CD4-positive, alpha-beta memory T cell (primary cell): ENCODE measurements at regions of chr2 and their contacts with region 1.

Region 1: GRCh38 chr2:30315391-30316063 is 84.2 kb downstream of the LBH start:
- DNase-seq: peak; percentile 25 to 56 (median 40)
- H3K4me3 ChIP-seq: peak overlapping the region in 1 of 2 donors; percentile 14
- H3K4me3 Mint-ChIP-seq: peak overlapping the region in 6 of 8 donors; percentile 43 to 82 (median 68)
- H3K27ac ChIP-seq: peak overlapping the region; percentile 16
- H3K27ac Mint-ChIP-seq: peak overlapping the region; percentile 69 to 94 (median 93)
- H3K4me1 ChIP-seq: peaks cover 31% of the 10 kb centered on the region
- H3K4me1 Mint-ChIP-seq: peaks cover 23 to 35% (median 29%) of the 10 kb centered on the region in 4 donors
- H3K27me3 ChIP-seq: no peaks in the 10 kb centered on the region
- H3K27me3 Mint-ChIP-seq: no peaks in the 10 kb centered on the region

Region 2: GRCh38 chr2:30282086-30282485 is 33.4 kb before region 1 on chr2:
- CTCF ChIA-PET with region 1: no interaction called
- POLR2A ChIA-PET with region 1: no interaction called
- intact Hi-C with region 1: loop called (anchors 5 kb)
- DNase-seq: no peak
- H3K4me3 ChIP-seq: no peak overlapping the region
- H3K4me3 Mint-ChIP-seq: no peak overlapping the region
- H3K27ac ChIP-seq: no peak overlapping the region
- H3K27ac Mint-ChIP-seq: no peak overlapping the region
- H3K4me1 ChIP-seq: peaks cover 2% of the 10 kb centered on the region
- H3K4me1 Mint-ChIP-seq: peaks cover 6 to 13% (median 8%) of the 10 kb centered on the region in 4 donors
- H3K27me3 ChIP-seq: no peaks in the 10 kb centered on the region
- H3K27me3 Mint-ChIP-seq: no peaks in the 10 kb centered on the region

Region 3: DNA sequence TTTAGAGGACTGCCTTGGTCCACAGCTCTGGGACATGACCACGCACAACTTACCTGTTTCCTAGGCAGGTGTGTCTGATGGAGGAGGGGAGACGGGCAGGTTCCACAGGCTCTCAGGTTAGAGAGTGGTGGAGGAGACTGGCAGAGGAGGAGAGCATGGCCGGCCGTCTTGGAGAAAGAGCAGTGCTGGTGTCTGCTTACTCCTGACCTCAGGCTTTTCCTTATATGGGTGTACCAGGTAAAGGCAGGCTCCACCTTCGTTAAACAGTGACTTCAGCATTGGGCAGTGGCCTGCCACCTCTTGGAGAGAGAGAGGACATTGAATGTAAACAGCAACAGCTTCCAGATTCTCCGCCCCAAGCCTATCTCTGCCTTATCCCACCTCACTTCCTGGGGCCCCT is 491.7 kb after region 1 on chr2 and contains the start of gene CAPN13:
- CTCF ChIA-PET with region 1: no interaction called
- POLR2A ChIA-PET with region 1: no interaction called
- intact Hi-C with region 1: no loop called
- DNase-seq: no peak
- H3K4me3 ChIP-seq: no peak within 1 kb of the TSS
- H3K4me3 Mint-ChIP-seq: no peak within 1 kb of the TSS
- H3K27ac ChIP-seq: no peak within 1 kb of the TSS
- H3K27ac Mint-ChIP-seq: no peak within 1 kb of the TSS
- H3K4me1 ChIP-seq: no peaks in the 10 kb centered on the region
- H3K4me1 Mint-ChIP-seq: no peaks in the 10 kb centered on the region
- H3K27me3 ChIP-seq: no peaks in the 10 kb centered on the region
- H3K27me3 Mint-ChIP-seq: peaks cover 9 to 17% of the 10 kb centered on the region in 2 donors
- total RNA-seq, gene CAPN13: not detected